Activated CD4-positive, alpha-beta memory T cell treated with anti-CD3 and anti-CD28 coated beads for 36 hours (primary cell): ENCODE measurements at regions of chr14 and their contacts with region 1.

Region 1: DNA sequence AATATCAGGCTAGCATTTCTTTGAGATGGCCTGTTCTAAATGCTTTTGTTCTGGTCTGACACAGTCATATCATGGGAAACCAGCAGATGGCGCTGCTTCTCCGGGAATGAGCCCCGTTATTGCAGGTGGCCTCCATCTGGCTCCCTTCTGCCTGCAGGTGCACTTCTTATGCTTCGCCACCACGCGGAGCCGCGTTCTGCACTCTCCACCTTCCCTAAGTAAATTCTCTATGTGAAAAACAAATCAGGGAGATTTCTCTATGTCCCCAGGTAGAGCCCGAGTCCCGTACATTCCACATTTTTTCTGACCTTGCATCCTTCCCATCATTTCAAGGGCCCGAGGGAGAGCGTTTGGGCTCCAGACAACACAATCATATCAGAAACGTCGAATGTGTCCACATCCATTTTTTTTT is 26.2 kb downstream of the GLRX5 start:
- DNase-seq: peak; percentile 92
- H3K4me3 Mint-ChIP-seq: no peak overlapping the region
- H3K27ac Mint-ChIP-seq: no peak overlapping the region
- H3K4me1 Mint-ChIP-seq: peaks cover 4% of the 10 kb centered on the region
- H3K27me3 Mint-ChIP-seq: peaks cover 5% of the 10 kb centered on the region

Region 2: GRCh38 chr14:95683793-95684192 is 122.8 kb after region 1 on chr14:
- CTCF ChIA-PET with region 1: interaction called, 23 read pairs
- POLR2A ChIA-PET with region 1: no interaction called
- intact Hi-C with region 1: loop called (anchors 1 kb)
- DNase-seq: peak; percentile 45
- H3K4me3 Mint-ChIP-seq: no peak overlapping the region
- H3K27ac Mint-ChIP-seq: no peak overlapping the region
- H3K4me1 Mint-ChIP-seq: no peaks in the 10 kb centered on the region
- H3K27me3 Mint-ChIP-seq: peaks cover 6% of the 10 kb centered on the region

Region 3: GRCh38 chr14:95774265-95775160 is 213.5 kb after region 1 on chr14:
- CTCF ChIA-PET with region 1: interaction called, 19 read pairs
- POLR2A ChIA-PET with region 1: no interaction called
- intact Hi-C with region 1: loop called (anchors 1 kb)
- DNase-seq: peak; percentile 55
- H3K4me3 Mint-ChIP-seq: no peak overlapping the region
- H3K27ac Mint-ChIP-seq: no peak overlapping the region
- H3K4me1 Mint-ChIP-seq: no peaks in the 10 kb centered on the region
- H3K27me3 Mint-ChIP-seq: peaks cover 10% of the 10 kb centered on the region

Region 4: GRCh38 chr14:95786566-95786965 is 225.6 kb after region 1 on chr14:
- CTCF ChIA-PET with region 1: no interaction called
- POLR2A ChIA-PET with region 1: no interaction called
- intact Hi-C with region 1: no loop called
- DNase-seq: no peak
- H3K4me3 Mint-ChIP-seq: no peak overlapping the region
- H3K27ac Mint-ChIP-seq: no peak overlapping the region
- H3K4me1 Mint-ChIP-seq: no peaks in the 10 kb centered on the region
- H3K27me3 Mint-ChIP-seq: peaks cover 15% of the 10 kb centered on the region